Activated T-helper 2 cell treated with anti-CD3 and anti-CD28 coated beads, Interferon-gamma antibody, Interleukin-2, Interleukin-4, amounts not matched to agents 10 μg/mL and 5 μg/mL and 100 μg/mL, durations not matched to agents 14 hours and 24 hours and 36 hours (primary cell): ENCODE measurements at regions of chrX and their contacts with region 1.

Region 1: DNA sequence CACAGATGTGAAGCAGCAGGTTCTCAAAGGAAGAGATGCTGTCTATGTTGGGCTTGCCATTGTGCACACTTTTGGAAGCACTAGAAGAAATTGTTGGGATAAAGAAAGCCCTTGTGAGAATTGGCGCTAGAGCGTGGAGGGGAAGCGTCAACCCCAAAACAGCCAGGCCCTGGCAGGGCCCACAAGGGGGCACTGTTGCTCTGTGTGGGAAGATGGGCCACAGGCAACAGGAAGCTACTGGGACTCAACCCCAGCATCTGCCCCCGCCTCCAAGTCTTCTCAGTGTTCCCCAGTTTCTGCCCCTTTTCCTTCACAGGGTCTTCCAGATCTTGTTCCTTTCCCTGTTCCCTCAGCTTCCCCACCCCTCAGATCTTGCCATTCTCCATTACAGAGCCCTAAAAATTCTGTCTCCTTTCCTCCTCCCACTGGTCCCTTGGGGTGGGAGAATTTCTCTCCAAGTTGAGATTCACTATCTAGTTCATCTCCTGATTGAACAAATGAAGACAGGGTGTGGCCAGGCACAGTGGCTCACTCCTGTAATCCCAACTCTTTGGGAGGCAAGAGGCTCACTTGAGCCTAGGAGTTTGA is 85.5 kb downstream of the STARD8 start:
- DNase-seq: peak; percentile 45
- H3K4me3 Mint-ChIP-seq: no peak overlapping the region
- H3K27ac Mint-ChIP-seq: no peak overlapping the region
- H3K4me1 Mint-ChIP-seq: peaks cover 2% of the 10 kb centered on the region
- H3K27me3 Mint-ChIP-seq: peaks cover 4% of the 10 kb centered on the region

Region 2: GRCh38 chrX:68807818-68808217 is 74.8 kb after region 1 on chrX:
- intact Hi-C with region 1: loop called (anchors 2 kb)
- DNase-seq: no peak
- H3K4me3 Mint-ChIP-seq: no peak overlapping the region
- H3K27ac Mint-ChIP-seq: no peak overlapping the region
- H3K4me1 Mint-ChIP-seq: no peaks in the 10 kb centered on the region
- H3K27me3 Mint-ChIP-seq: peaks cover 12% of the 10 kb centered on the region

Region 3: GRCh38 chrX:68828740-68829552 is 95.9 kb after region 1 on chrX and contains the start of gene EFNB1:
- intact Hi-C with region 1: loop called (anchors 1 kb)
- DNase-seq: peak; percentile 80
- H3K4me3 Mint-ChIP-seq: peak within 1 kb of the TSS; percentile 81
- H3K27ac Mint-ChIP-seq: peak within 1 kb of the TSS; percentile 14
- H3K4me1 Mint-ChIP-seq: peaks cover 16% of the 10 kb centered on the region
- H3K27me3 Mint-ChIP-seq: peaks cover 5% of the 10 kb centered on the region
- total RNA-seq, gene EFNB1: 7.4 and 7.6 TPM in 2 replicates

Region 4: GRCh38 chrX:68878977-68879645 is 146.1 kb after region 1 on chrX:
- intact Hi-C with region 1: no loop called
- DNase-seq: no peak
- H3K4me3 Mint-ChIP-seq: no peak overlapping the region
- H3K27ac Mint-ChIP-seq: no peak overlapping the region
- H3K4me1 Mint-ChIP-seq: no peaks in the 10 kb centered on the region
- H3K27me3 Mint-ChIP-seq: no peaks in the 10 kb centered on the region

Region 5: DNA sequence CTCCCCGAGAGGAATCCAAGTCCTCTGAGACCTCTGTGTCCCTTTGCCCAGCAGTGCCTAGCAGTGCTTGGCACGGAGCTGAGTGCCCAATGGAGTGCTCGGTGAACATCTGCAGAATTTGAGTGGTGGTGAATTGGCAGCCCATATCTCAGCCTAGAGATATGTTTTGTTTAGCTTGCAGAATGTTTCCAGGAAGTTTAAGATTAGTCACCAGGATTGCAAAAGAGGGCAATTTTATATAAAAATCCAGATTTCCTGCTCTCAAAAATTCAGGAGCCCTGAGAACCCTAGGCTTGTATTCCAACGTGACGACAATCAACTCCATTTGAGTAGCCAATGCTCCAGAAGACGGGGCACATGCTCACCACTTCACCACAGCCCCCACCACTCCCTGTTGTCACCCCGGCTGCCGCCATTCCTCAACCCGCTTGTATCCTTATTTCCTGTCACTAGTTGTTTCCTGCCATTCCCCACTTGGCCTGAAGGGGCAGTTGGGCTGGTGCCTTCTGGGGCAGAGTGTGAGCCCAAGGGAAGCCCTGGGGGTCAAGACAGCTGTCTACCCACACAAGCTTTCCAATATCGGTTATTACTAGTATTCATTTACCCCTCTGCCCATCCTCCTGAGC is 212.7 kb after region 1 on chrX:
- intact Hi-C with region 1: no loop called
- DNase-seq: no peak
- H3K4me3 Mint-ChIP-seq: no peak overlapping the region
- H3K27ac Mint-ChIP-seq: no peak overlapping the region
- H3K4me1 Mint-ChIP-seq: no peaks in the 10 kb centered on the region
- H3K27me3 Mint-ChIP-seq: no peaks in the 10 kb centered on the region

Region 6: DNA sequence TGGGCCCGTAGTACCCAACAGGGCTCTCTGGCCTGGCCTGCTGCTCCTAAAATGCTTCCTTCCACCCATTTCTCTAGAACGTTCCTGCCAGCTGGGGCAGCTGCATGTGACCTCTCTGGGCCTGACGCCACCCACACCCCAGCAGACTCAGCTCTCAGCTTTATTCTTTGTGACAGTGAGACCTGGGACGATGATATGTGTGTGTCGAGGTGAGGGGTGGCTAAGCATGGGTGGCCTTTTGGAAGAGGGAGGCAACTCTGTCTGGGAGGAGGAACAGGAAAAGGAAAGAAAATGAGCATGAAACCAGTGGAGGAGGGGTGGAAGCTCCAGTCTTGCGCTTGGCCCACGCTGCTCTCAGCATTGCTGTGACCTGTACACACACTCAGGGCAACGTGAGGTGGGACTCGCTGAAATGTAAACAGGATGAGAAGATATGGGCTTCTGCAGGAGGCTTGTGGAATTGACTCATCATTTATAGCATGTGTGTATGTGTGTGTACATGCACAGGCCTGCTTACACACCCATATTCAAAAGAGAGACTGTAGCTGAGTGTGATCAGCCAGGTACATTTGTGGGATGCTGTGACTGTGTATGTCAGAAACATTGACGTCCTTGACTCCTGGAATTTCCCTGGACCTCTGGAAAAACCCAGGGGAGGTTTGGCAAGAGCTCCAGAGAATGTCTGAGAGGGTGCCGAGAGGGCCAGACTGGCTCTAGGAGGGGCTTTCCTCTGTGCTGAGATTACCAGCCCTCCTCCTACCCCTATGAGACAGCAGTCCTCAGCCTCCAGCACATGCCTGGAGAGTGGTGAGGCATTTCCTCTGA is 294.4 kb after region 1 on chrX:
- intact Hi-C with region 1: no loop called
- DNase-seq: no peak
- H3K4me3 Mint-ChIP-seq: no peak overlapping the region
- H3K27ac Mint-ChIP-seq: no peak overlapping the region
- H3K4me1 Mint-ChIP-seq: no peaks in the 10 kb centered on the region
- H3K27me3 Mint-ChIP-seq: no peaks in the 10 kb centered on the region

Region 7: GRCh38 chrX:69222103-69223090 is 489.4 kb after region 1 on chrX:
- intact Hi-C with region 1: loop called (anchors 1 kb)
- DNase-seq: peak; percentile 46
- H3K4me3 Mint-ChIP-seq: no peak overlapping the region
- H3K27ac Mint-ChIP-seq: no peak overlapping the region
- H3K4me1 Mint-ChIP-seq: no peaks in the 10 kb centered on the region
- H3K27me3 Mint-ChIP-seq: peaks cover 2% of the 10 kb centered on the region

Region 8: DNA sequence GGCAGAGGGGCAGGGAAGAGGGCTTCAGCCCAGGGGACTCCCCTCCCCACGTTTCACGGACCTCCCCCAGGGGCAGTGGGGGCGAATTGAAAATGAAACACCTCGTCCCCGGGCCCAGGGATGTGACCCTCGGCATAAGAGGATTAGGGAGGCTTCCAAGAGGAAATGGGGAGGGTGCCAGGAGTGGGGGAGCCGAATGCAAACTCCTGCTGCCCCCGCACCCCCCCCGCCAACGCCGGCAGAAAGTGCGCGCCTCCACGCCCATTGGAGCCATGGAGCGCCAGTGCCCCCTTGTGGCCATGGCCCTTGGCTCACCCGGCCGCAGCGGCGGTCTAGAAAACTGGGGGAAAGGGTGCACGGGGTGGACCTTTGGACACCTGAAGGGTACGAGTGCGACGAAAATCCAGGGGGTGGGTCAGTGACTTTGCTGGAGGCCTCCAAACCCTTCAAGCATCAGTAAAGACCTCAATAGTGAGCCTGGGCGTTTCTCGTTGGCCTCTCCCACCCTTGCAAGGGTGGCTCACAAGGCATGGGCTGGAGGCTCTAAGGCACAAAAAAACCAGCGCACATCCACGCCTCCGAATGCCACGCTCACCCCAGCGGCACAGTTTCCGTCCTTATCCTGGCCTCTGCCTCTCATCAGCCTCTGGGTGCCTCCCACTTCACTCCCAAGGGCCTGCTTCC is 553.0 kb after region 1 on chrX:
- intact Hi-C with region 1: loop called (anchors 5 kb)
- DNase-seq: peak; percentile 13
- H3K4me3 Mint-ChIP-seq: no peak overlapping the region
- H3K27ac Mint-ChIP-seq: no peak overlapping the region
- H3K4me1 Mint-ChIP-seq: no peaks in the 10 kb centered on the region
- H3K27me3 Mint-ChIP-seq: peaks cover 1% of the 10 kb centered on the region

Region 9: GRCh38 chrX:69387567-69388487 is 654.8 kb after region 1 on chrX:
- intact Hi-C with region 1: loop called (anchors 5 kb)
- DNase-seq: no peak
- H3K4me3 Mint-ChIP-seq: no peak overlapping the region
- H3K27ac Mint-ChIP-seq: no peak overlapping the region
- H3K4me1 Mint-ChIP-seq: no peaks in the 10 kb centered on the region
- H3K27me3 Mint-ChIP-seq: no peaks in the 10 kb centered on the region